ENCODE measurements at regions of chr6 and their contacts with region 1.

Region 1: GRCh38 chr6:26025894-26026832 is 61.1 kb upstream of the HFE start:
- DNase-seq: peak; percentile 97
- H3K4me3 Mint-ChIP-seq: peak overlapping the region; percentile 93
- H3K27ac Mint-ChIP-seq: peak overlapping the region; percentile 98
- H3K4me1 Mint-ChIP-seq: peaks cover 64% of the 10 kb centered on the region
- H3K27me3 Mint-ChIP-seq: peaks cover 3% of the 10 kb centered on the region

Region 2: DNA sequence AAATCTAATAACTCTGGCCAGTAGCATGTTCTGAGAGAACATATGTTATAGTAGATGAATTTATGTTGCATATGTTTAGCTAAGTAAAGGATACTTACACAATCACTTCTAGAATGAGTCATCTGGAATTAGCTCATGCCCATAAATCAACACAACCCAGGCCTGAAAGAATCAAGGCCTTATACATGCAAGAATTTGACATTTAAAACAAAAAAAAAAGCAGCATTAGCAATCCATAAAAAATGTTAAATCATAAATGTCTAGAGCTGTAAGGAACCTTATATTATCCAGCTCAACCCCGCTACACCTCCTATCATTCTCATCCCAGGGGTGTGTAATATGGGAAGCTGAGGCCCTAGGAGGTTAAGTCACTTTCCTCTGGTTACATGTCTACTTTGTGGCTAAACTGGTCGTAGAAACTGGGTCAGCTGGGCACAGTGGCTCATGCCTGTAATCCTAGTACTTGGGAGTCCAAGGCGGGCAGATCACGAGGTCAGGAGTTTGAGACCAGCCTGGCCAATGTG is 852.1 kb before region 1 on chr6:
- intact Hi-C with region 1: loop called (anchors 10 kb)
- DNase-seq: peak; percentile 56
- H3K4me3 Mint-ChIP-seq: peak overlapping the region; percentile 44
- H3K27ac Mint-ChIP-seq: peak overlapping the region; percentile 75
- H3K4me1 Mint-ChIP-seq: peaks cover 77% of the 10 kb centered on the region
- H3K27me3 Mint-ChIP-seq: no peaks in the 10 kb centered on the region

Region 3: GRCh38 chr6:26045065-26045927 is 19.1 kb after region 1 on chr6:
- intact Hi-C with region 1: loop called (anchors 1 kb)
- DNase-seq: peak; percentile 96
- H3K4me3 Mint-ChIP-seq: peak overlapping the region; percentile 86
- H3K27ac Mint-ChIP-seq: peak overlapping the region; percentile 99
- H3K4me1 Mint-ChIP-seq: peaks cover 33% of the 10 kb centered on the region
- H3K27me3 Mint-ChIP-seq: no peaks in the 10 kb centered on the region

Region 4: DNA sequence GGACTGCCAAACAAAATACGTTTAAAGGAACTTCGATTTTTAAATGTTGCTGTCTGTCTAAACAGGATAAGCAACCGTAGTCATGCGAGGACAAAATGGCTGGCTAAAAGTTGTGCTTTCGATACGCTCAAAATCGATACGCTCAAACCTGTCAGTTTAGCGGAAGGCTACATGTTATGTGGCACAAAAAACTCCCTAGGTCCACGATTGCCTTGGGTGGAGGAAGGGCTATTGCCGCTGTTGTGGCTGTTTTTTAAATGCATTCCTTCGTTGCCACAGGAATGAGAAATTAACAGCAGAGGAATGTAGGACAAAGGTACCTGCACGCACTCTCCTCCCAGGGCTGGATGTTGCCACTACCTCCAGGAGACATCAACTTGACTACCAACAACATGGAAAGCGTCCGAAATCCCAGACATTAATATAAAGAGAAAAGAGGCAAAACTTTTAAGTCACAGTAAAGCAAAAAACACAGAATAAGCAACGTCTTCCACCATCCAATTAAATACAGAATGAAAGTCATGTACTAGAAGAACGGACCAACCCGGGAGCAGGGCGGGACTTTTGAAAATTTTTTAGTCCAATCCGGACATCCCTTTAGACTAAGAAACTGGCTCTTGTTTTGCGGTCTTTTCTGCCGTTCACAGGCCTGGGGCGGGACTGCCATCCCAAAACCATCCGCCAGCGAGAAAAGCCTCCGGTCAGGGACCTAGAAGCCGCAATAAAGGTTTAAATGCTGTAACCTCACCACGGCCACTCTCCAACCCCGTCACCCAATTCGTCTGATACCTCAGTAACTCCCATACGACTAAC is 28.9 kb after region 1 on chr6:
- intact Hi-C with region 1: loop called (anchors 1 kb)
- DNase-seq: peak; percentile 96
- H3K4me3 Mint-ChIP-seq: peak overlapping the region; percentile 94
- H3K27ac Mint-ChIP-seq: peak overlapping the region; percentile 99
- H3K4me1 Mint-ChIP-seq: peaks cover 30% of the 10 kb centered on the region
- H3K27me3 Mint-ChIP-seq: peaks cover 2% of the 10 kb centered on the region

Region 5: DNA sequence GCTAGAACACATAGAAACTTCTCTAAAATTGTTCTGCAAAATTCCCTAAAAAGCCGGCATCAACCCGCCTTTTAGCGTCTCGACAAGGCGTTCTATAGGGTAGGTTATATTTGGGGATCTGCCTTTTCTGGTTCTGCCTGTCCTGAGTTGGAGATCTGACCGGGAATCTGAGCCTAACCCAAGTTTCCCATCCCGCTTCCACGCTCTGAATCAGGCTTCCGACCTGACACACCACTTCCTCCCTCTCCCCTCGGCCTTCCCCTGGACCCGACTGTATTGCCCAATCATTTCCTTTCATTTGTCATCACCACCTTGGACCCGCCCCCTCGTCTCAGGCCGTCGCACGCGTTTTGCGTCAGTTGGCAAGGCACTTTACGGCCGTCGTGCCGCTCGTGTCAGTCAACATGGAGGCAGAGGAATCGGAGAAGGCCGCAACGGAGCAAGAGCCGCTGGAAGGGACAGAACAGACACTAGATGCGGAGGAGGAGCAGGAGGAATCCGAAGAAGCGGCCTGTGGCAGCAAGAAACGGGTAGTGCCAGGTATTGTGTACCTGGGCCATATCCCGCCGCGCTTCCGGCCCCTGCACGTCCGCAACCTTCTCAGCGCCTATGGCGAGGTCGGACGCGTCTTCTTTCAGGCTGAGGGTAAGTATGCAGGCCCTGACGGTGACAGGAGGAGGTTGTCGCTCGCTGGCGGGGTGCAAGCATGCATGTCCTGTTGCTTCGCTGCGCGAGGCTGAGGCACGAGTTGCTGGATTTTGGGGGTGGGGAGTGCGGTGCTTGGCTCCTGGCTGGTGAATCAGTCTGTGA is 570.6 kb after region 1 on chr6 and contains the start of gene ABT1:
- intact Hi-C with region 1: no loop called
- DNase-seq: peak; percentile 99
- H3K4me3 Mint-ChIP-seq: no peak within 1 kb of the TSS
- H3K27ac Mint-ChIP-seq: no peak within 1 kb of the TSS
- H3K4me1 Mint-ChIP-seq: peaks cover 32% of the 10 kb centered on the region
- H3K27me3 Mint-ChIP-seq: peaks cover 28% of the 10 kb centered on the region
- total RNA-seq, gene ABT1: 31.9 and 32.1 TPM in 2 replicates

Region 6: DNA sequence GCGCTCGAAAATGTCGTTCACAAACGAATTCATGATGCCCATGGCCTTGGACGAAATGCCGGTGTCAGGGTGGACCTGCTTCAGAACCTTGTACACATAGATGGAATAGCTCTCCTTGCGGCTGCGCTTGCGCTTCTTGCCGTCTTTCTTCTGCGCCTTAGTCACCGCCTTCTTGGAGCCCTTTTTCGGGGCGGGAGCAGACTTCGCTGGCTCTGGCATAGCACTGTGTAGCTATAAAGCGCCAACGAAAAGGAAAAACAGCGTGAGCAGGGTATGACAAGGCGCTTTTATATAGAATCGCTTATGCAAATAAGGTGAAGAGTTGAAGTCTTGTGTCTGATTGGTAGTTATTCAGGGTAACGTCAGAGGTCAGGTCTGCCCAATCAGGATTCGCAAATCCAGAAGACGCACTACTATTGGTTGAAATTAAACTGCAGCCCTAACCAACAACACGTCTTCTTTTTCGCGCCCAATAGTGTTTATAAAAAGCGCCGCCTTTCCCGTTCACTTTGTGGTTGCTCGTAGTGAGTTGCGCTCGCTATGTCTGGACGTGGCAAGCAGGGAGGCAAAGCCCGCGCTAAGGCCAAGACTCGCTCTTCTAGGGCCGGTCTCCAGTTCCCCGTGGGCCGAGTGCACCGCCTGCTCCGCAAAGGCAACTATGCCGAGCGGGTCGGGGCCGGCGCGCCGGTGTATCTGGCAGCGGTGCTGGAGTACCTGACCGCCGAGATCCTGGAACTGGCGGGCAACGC is 1106.5 kb after region 1 on chr6:
- intact Hi-C with region 1: loop called (anchors 2 kb)
- DNase-seq: peak; percentile 98
- H3K4me3 Mint-ChIP-seq: no peak overlapping the region
- H3K27ac Mint-ChIP-seq: no peak overlapping the region
- H3K4me1 Mint-ChIP-seq: peaks cover 37% of the 10 kb centered on the region
- H3K27me3 Mint-ChIP-seq: no peaks in the 10 kb centered on the region

Region 7: DNA sequence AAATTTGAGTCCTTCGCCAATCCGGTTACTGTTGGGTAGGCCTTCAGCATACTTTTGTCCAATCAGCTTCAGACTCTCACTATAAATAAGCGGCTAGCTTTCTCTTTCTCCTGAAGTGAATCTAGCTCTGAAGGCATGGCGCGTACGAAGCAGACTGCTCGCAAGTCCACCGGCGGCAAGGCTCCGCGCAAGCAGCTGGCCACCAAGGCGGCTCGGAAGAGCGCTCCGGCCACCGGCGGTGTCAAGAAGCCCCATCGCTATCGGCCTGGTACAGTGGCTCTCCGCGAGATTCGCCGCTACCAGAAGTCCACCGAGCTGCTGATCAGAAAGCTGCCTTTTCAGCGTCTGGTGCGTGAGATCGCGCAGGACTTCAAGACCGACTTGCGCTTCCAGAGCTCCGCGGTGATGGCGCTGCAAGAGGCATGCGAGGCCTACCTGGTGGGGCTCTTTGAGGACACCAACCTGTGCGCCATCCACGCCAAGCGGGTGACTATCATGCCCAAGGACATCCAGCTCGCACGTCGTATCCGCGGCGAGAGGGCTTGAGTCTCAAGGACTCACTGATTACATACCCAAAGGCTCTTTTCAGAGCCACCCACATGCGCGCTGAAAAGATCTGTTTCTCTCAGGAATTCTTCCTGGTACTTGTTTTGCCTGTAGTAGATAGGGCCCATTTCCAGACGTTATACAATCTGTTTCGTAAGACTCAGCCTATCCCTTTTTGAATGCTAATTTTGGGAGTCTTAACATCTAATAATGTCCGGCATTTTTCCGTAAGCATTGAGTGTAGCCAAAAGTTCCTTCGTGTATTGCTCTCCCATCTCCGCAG is 1784.0 kb after region 1 on chr6:
- intact Hi-C with region 1: loop called (anchors 5 kb)
- DNase-seq: peak; percentile 96
- H3K4me3 Mint-ChIP-seq: peak overlapping the region; percentile 87
- H3K27ac Mint-ChIP-seq: peak overlapping the region; percentile 96
- H3K4me1 Mint-ChIP-seq: peaks cover 67% of the 10 kb centered on the region
- H3K27me3 Mint-ChIP-seq: no peaks in the 10 kb centered on the region

Region 8: DNA sequence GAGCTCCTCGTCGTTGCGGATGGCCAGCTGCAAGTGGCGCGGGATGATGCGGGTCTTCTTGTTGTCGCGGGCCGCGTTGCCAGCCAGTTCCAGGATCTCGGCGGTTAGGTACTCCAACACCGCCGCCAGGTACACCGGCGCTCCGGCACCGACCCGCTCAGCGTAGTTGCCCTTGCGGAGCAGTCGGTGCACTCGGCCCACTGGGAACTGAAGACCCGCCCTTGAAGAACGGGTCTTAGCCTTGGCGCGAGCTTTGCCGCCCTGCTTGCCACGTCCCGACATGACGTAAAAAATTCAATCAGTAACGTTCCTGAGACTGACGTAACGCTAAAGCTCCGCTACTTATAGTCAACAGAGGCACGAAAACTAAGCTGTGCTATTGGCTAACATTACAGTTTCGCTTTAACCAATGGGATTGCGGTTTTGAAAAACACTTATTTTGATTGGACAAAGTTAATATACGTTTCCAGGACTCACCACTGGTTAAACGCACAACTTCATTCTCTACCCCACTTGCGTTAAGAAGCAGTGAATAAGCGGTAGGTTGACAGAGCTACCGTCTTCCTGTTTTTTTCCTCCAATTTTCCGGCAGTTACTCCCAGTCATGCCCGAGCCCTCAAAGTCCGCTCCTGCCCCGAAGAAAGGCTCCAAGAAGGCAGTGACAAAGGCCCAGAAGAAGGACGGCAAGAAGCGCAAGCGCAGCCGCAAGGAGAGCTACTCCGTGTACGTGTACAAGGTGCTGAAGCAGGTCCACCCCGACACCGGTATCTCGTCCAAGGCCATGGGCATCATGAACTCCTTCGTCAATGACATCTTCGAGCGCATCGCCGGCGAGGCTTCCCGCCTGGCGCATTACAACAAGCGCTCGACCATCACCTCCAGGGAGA is 1812.1 kb after region 1 on chr6:
- intact Hi-C with region 1: loop called (anchors 10 kb)
- DNase-seq: peak; percentile 96
- H3K4me3 Mint-ChIP-seq: no peak overlapping the region
- H3K27ac Mint-ChIP-seq: no peak overlapping the region
- H3K4me1 Mint-ChIP-seq: peaks cover 28% of the 10 kb centered on the region
- H3K27me3 Mint-ChIP-seq: no peaks in the 10 kb centered on the region